ENCODE measurements at regions of chrX and their contacts with region 1.

Region 1: GRCh38 chrX:150772150-150772970 is 79.2 kb downstream of the MTMR1 start:
- DNase-seq: peak; percentile 58 to 84
- ATAC-seq: peak; percentile 91

Region 2: DNA sequence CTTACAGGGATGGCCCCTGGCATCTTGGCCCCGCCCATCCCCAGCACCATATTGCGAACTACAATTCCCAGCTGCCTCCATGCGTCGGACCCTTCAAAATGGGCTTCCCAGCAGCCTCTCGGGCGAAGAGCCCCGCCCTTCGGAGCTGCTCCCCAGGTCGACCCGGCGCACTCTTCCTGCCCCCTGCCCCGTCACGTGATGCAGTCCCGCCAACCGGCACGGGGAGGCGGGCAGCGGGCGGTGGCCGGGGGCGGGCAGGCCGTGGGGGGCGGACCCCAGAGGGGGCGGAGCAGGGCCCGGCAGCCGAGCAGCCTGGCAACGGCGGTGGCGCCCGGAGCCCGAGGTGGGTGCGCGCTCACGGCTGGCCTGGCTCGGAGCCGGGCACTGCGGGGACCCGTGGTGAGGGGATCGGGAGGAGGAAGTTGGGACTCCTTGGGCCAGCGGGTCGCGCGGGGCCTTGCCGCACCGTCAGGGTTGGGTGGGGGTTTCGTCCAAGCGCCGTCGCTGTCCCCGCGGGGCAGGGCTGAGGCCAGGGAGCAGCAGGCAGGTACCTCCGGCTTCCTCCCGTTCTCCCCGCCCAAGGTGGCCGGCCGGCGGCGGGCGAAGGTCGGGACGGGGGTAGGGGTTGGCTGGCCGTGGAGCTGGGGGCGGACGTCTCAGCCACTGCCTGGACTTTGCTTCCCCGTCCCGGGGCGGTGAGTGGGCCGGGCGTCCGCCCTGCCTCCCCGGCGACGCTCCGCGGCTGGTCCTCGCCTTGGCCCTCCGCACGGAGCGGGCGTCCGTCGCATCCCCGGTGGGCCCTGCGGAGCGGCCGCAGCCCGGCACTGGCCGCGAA is 203.8 kb before region 1 on chrX and contains the start of gene MTM1:
- intact Hi-C with region 1: no loop called
- DNase-seq: peak; percentile 92 to 96
- ATAC-seq: peak; percentile 82
- total RNA-seq, gene MTM1: 51.8 to 66.6 TPM

Region 3: DNA sequence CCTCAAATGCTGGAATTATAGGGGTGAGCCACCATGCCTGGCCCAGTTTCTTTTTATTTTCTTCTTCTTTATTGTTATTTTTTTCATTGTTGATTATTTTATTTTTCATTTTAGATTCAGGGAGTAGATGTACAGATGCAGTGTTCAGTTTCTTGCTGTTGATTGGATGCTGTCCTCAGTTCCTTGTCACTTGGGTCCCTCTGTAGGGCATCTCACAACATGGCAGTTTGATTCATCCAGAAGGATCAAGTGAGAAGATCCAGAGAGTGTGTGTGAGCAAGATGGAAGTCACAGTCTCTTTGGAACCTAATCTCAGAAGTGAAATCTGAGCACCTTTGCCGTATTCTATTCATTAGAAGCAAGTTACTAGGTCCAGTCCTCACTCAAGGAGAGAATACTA is 231.7 kb after region 1 on chrX:
- intact Hi-C with region 1: loop called in 1 of 2 experiments (anchors 10 kb)
- DNase-seq: no peak
- ATAC-seq: peak; percentile 75

Region 4: DNA sequence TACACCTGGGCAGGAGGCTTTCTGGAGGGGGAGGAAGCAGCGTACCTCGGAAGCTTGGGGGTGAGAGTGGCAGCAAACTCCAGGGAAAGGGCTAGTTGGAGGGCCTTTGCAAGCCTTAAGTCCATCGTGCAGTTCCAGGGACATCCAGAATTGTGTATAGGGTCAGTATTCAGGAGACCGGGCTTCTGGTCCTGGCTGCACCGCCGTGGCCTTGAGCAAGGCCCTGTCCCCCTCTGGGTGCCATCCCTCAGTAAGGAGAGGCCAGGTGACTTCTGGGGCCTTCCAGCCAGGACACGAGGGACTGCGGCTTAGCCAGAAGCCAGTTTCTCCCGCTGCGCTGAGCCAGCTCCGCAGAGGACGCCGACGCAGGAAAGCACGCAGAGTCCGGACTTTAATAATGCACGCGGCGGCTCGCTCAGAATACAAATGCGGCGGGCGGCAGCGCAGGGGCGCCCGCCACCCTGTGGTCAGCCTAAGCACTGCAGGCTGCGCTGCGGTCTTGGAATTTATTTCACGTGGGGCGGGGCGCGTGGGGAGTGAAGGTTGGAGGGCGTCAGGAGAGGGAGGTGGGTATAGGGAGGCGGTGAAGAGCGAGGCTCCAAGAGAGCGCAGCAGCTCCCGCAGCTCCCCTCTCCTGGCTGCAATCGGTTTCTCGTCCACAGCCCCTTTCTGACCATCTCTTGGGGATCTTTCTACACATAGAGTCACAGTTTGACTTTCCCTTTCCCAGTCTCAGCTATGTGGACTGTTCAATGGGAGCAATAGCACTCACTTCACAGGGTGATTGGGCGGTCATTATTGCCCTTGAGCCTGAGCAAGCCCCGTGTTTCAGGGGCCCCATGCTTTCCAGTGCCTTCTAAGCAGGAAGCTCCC is 310.0 kb after region 1 on chrX:
- intact Hi-C with region 1: loop called (anchors 5 kb)
- DNase-seq: peak; percentile 34 to 69
- ATAC-seq: peak; percentile 97